Gastrocnemius medialis (tissue), 4 donors: ENCODE measurements at regions of chr9 and their contacts with region 1.

Region 1: GRCh38 chr9:112348257-112349007 is 15.0 kb upstream of the PTBP3 start:
- DNase-seq: peak; percentile 56 to 61
- ATAC-seq: peak; percentile 39 to 66
- H3K4me3 ChIP-seq: peak overlapping the region; percentile 34 to 65 (median 43)
- H3K27ac ChIP-seq: no peak overlapping the region
- H3K4me1 ChIP-seq: peaks cover 0 to 5% of the 10 kb centered on the region in 2 donors
- H3K27me3 ChIP-seq: no peaks in the 10 kb centered on the region
- CTCF ChIP-seq: no peak
- POLR2A ChIP-seq: no peak

Region 2: DNA sequence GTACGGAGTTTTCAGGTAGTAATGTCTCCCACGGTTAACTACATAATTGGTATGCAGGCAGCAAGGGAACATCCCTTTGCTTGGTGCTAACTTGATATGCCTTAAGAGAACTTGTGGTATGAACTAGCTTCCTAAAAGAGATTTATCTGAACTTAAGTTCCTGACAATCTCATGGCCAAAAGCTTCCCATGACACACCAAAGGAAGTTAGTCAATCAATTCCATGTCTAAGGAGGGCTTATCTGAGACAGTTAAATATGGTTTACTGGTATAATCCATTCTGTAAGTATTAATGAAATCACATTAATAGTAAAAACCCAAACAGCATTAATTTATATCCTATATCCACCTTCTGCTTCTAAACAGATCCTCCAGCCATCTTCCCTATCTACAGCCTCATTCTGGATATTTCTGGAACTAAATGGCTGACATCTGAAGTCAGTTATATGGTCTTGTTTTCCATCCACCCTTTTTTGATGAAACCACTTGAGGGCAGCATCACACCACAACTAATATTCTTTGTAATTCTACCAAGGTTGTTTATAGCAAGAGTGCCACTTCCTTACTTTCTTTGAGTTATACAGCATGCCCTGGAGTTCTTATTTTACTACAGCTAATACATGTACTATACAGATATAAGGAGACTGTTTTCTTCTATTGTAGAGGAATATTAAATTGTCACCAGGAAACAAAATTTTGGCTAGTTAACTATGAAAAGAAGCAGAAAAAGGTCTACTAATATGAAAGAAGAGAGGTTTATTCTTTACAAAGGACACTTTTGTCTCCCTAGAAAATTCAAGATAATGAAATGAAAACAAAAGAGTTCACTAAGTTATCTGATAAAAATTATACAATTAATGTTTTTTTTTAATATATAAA is 588.4 kb before region 1 on chr9:
- in situ Hi-C with region 1: loop called (anchors 10 to 25 kb)
- intact Hi-C with region 1: no loop called
- DNase-seq: no peak
- ATAC-seq: peak; percentile 89 to 90
- H3K4me3 ChIP-seq: no peak overlapping the region
- H3K27ac ChIP-seq: no peak overlapping the region
- H3K4me1 ChIP-seq: peaks cover 0 to 4% of the 10 kb centered on the region in 2 donors
- H3K27me3 ChIP-seq: no peaks in the 10 kb centered on the region
- CTCF ChIP-seq: peak; percentile 31 to 75 (median 59)
- POLR2A ChIP-seq: no peak

Region 3: DNA sequence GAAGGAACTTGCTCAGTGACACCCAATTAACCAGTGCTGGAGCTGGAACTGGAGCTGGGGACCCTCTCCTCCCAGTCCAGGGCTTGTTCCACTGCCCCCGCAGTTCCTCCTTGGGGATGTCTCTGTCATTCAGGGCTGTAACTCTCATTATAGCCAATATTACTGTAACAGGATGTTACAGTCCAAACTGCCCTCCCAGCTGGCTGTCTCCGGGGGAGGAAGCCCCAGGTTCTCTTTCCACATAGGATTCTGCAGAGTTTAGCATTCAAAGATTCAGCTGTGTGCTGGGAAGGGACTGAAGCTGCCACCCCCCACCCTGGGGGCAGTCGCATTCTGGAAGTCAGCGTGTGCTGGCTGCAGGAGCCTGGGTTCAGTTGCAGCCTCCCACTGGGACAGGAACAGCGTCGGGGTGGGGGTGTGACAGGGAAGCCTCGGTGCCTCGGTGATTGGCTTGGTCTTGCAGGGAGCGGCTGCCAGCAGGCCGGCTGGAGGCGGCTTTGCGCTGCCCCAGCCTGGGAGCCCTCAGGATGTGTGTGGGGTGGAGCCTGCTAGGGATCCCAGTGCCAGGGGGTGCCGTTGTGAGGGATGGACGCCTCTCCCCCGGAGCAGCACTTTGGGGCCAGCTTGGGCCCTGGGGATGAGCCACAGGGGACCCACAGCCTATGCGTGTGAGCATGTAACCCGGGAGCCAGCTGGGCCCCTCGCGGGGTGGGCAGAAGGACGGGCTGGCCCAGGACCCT is 1216.2 kb after region 1 on chr9:
- in situ Hi-C with region 1: no loop called
- intact Hi-C with region 1: no loop called
- DNase-seq: peak in 1 of 2 donors; percentile 45
- ATAC-seq: peak in 1 of 2 donors; percentile 26
- H3K4me3 ChIP-seq: peak overlapping the region; percentile 43 to 52 (median 48)
- H3K27ac ChIP-seq: peak overlapping the region; percentile 77 to 85 (median 79)
- H3K4me1 ChIP-seq: peaks cover 57 to 58% of the 10 kb centered on the region in 2 donors
- H3K27me3 ChIP-seq: no peaks in the 10 kb centered on the region
- CTCF ChIP-seq: no peak
- POLR2A ChIP-seq: no peak